Motor neuron (in vitro differentiated cells): ENCODE measurements at regions of chr15 and their contacts with region 1.

Region 1: DNA sequence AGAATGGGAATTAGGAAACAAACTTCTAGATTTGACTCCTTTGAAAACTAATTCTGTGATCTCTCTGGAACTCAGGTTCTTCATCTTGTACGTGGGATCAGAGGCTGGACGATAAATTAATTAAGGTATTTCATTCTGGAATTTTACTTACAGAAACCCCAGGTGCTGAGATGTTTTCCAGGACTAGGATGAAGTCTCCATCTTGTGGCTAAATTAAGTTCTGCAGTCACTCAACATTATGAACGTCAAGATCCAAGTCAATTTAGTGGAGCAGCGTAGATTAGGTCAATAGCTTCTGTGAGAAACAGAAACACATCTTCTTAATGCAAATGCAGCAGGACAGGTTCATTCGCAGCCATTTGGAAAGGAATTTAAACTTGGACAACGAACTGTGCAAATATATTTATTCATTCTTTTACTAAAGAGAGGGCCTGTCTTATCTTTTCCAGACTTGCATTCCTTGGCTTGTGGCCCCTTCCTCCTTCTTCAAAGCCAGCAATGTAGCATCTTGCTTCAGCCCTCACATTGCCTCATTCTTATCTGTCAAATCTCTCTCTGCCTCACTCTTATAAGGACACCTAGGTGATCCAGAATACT is 26.7 kb upstream of the TMC3 start:
- ATAC-seq: peak in 3 of 8 experiments; percentile 39 to 43 (median 42)
- H3K4me3 ChIP-seq: no peak overlapping the region
- H3K27ac ChIP-seq: no peak overlapping the region
- H3K4me1 ChIP-seq: no peaks in the 10 kb centered on the region

Region 2: GRCh38 chr15:81274931-81275707 is 125.6 kb before region 1 on chr15:
- in situ Hi-C with region 1: loop called in 5 of 9 experiments (anchors 5 to 25 kb)
- ATAC-seq: peak; percentile 67 to 97 (median 82)
- H3K4me3 ChIP-seq: no peak overlapping the region
- H3K27ac ChIP-seq: no peak overlapping the region
- H3K4me1 ChIP-seq: no peaks in the 10 kb centered on the region

Region 3: GRCh38 chr15:81286621-81287121 is 114.1 kb before region 1 on chr15:
- in situ Hi-C with region 1: loop called in 3 of 9 experiments (anchors 5 to 25 kb)
- ATAC-seq: no peak
- H3K4me3 ChIP-seq: no peak overlapping the region
- H3K27ac ChIP-seq: no peak overlapping the region
- H3K4me1 ChIP-seq: no peaks in the 10 kb centered on the region